ENCODE measurements at regions of chr6 and their contacts with region 1.

Region 1: GRCh38 chr6:134247231-134247833 is 70.6 kb downstream of the SGK1 start:
- DNase-seq: peak; percentile 97
- ATAC-seq: peak; percentile 94
- H3K4me3 ChIP-seq: no peak overlapping the region
- H3K27ac ChIP-seq: peak overlapping the region; percentile 64
- H3K4me1 ChIP-seq: peaks cover 31% of the 10 kb centered on the region
- H3K27me3 ChIP-seq: no peaks in the 10 kb centered on the region; a peak in 1 of 4 replicates
- CTCF ChIP-seq: no peak
- EP300 ChIP-seq: peak; percentile 90 to 97
- POLR2A ChIP-seq: no peak
- RAD21 ChIP-seq: no peak

Region 2: GRCh38 chr6:134217105-134217797 is 30.1 kb before region 1 on chr6:
- CTCF ChIA-PET with region 1: no interaction called
- POLR2A ChIA-PET with region 1: no interaction called
- RAD21 ChIA-PET with region 1: no interaction called
- SMC1A ChIA-PET with region 1: no interaction called
- in situ Hi-C with region 1: no loop called
- intact Hi-C with region 1: no loop called
- DNase-seq: no peak
- ATAC-seq: no peak
- H3K4me3 ChIP-seq: no peak overlapping the region
- H3K27ac ChIP-seq: no peak overlapping the region
- H3K4me1 ChIP-seq: no peaks in the 10 kb centered on the region
- H3K27me3 ChIP-seq: no peaks in the 10 kb centered on the region
- CTCF ChIP-seq: no peak
- EP300 ChIP-seq: no peak
- POLR2A ChIP-seq: no peak
- RAD21 ChIP-seq: no peak

Region 3: GRCh38 chr6:134235937-134236751 is 11.2 kb before region 1 on chr6:
- CTCF ChIA-PET with region 1: interaction called, 4 read pairs
- POLR2A ChIA-PET with region 1: interaction called, 4 read pairs
- RAD21 ChIA-PET with region 1: interaction called, 7 read pairs
- SMC1A ChIA-PET with region 1: interaction called, 32 read pairs
- in situ Hi-C with region 1: no loop called
- intact Hi-C with region 1: loop called (anchors 1 kb)
- DNase-seq: peak; percentile 77
- ATAC-seq: peak; percentile 96
- H3K4me3 ChIP-seq: no peak overlapping the region
- H3K27ac ChIP-seq: peak overlapping the region; percentile 47
- H3K4me1 ChIP-seq: peaks cover 12% of the 10 kb centered on the region
- H3K27me3 ChIP-seq: no peaks in the 10 kb centered on the region
- CTCF ChIP-seq: no peak
- EP300 ChIP-seq: peak; percentile 69 to 77; a peak in 2 of 4 replicates
- POLR2A ChIP-seq: no peak
- RAD21 ChIP-seq: no peak

Region 4: DNA sequence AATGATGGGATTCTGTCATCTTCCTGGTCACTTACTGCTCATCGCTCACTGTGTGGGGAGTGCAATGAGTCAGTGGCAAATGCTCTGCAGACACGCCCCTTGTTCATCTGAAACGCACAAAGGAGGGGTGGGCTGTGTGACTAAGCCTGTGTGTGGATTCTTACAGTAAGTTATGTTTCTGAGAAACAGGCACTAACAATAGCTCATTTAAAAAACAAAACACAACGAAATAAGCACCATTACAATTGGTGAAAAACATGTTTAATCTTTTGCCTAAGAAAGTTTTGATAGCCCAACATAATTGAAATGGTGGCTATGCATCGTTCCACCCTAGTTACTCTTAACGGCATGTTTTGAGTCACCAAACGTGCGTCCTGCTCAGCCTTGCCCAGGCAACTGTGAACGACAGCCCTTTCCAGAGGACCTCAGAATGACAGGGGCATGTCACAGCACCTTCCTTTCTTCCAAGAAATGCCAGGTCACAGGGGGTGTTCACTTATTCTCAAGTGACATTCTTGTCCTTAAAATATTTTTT is 189.0 kb after region 1 on chr6:
- CTCF ChIA-PET with region 1: no interaction called
- POLR2A ChIA-PET with region 1: no interaction called
- RAD21 ChIA-PET with region 1: no interaction called
- SMC1A ChIA-PET with region 1: no interaction called
- in situ Hi-C with region 1: no loop called
- intact Hi-C with region 1: loop called (anchors 5 kb)
- DNase-seq: peak; percentile 57
- ATAC-seq: peak; percentile 95
- H3K4me3 ChIP-seq: peak overlapping the region; percentile 9; the same call in 1 of the 2 replicates
- H3K27ac ChIP-seq: no peak overlapping the region
- H3K4me1 ChIP-seq: peaks cover 9% of the 10 kb centered on the region
- H3K27me3 ChIP-seq: no peaks in the 10 kb centered on the region
- CTCF ChIP-seq: no peak
- EP300 ChIP-seq: no peak
- POLR2A ChIP-seq: no peak
- RAD21 ChIP-seq: no peak

Region 5: GRCh38 chr6:135191508-135192255 is 944.4 kb after region 1 on chr6:
- CTCF ChIA-PET with region 1: no interaction called
- POLR2A ChIA-PET with region 1: interaction called, 12 read pairs
- RAD21 ChIA-PET with region 1: no interaction called
- SMC1A ChIA-PET with region 1: no interaction called
- in situ Hi-C with region 1: no loop called
- intact Hi-C with region 1: no loop called
- DNase-seq: no peak
- ATAC-seq: peak; percentile 78
- H3K4me3 ChIP-seq: no peak overlapping the region
- H3K27ac ChIP-seq: peak overlapping the region; percentile 56
- H3K4me1 ChIP-seq: peaks cover 9% of the 10 kb centered on the region; the same call in 1 of the 2 replicates
- H3K27me3 ChIP-seq: no peaks in the 10 kb centered on the region
- CTCF ChIP-seq: no peak
- EP300 ChIP-seq: no peak
- POLR2A ChIP-seq: no peak
- RAD21 ChIP-seq: no peak

Measured in GM12878 (cell line).